CD8-positive, alpha-beta T cell (primary cell): ENCODE measurements at regions of chr11 and their contacts with region 1.

Region 1: GRCh38 chr11:64240394-64241174 is at the start of gene FKBP2:
- DNase-seq: peak; percentile 94 to 100 (median 97)
- ATAC-seq: peak; percentile 63
- H3K4me3 ChIP-seq: peak within 1 kb of the TSS; percentile 80 to 97
- H3K4me3 Mint-ChIP-seq: peak within 1 kb of the TSS; percentile 90
- H3K27ac ChIP-seq: peak within 1 kb of the TSS; percentile 94 to 99
- H3K27ac Mint-ChIP-seq: peak within 1 kb of the TSS; percentile 100
- H3K4me1 ChIP-seq: peaks cover 29% of the 10 kb centered on the region
- H3K4me1 Mint-ChIP-seq: peaks cover 34% of the 10 kb centered on the region
- H3K27me3 ChIP-seq: no peaks in the 10 kb centered on the region
- H3K27me3 Mint-ChIP-seq: no peaks in the 10 kb centered on the region
- CTCF ChIP-seq: no peak
- total RNA-seq, gene FKBP2: 19.4 TPM

Region 2: DNA sequence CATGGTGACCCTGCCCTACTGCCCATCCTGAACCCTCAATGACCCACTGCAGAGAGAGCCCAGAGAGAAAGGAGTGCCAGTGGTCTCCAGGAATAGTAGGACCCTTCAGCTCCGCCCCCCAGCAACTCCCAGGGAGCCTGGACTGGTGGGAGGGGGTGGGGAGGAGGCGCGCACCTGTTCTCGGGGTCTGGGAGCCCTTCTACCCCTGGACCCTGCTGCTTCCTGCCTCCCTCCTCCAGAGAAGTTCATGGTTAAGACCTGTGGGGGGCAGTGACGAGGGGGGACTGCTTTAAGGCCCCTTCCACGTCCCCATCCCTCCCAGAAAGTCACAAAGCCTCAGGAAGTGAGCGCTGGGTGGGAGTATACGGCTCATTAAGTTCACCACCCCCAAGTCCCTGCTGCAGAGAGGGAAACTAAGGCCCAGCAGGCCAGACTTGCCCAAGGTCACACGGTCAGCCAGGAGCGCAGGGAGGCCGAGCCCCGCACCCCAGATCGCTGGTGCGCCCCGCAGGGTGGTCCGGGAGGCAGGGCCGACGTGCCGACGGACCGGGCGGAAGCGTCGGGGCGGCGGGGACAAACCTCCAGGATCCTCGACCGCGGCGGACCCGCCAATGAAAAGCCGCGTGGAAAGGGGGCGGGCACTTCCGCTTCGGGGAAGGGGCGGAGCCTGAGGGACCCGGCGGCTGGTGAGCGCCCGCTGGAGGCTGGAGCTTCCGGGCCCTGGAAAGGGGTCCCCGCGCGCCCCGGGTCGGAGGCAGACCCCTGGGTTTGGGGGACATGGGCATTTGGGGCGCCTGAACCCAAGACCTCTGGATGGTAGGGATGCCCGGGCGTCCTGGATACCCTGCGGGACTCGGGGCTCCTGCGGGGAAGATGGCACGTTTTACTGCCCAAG is 14.7 kb before region 1 on chr11 and contains the starts of genes NUDT22 and TRPT1:
- CTCF ChIA-PET with region 1: interaction called, 7 read pairs
- POLR2A ChIA-PET with region 1: interaction called, 47 read pairs
- intact Hi-C with region 1: loop called (anchors 1 kb)
- DNase-seq: peak; percentile 75 to 96 (median 93)
- ATAC-seq: peak; percentile 65
- H3K4me3 ChIP-seq: peak within 1 kb of the TSS; percentile 76 to 100
- H3K4me3 Mint-ChIP-seq: peak within 1 kb of the TSS; percentile 93
- H3K27ac ChIP-seq: peak within 1 kb of the TSS; percentile 85 to 88
- H3K27ac Mint-ChIP-seq: peak within 1 kb of the TSS; percentile 91
- H3K4me1 ChIP-seq: peaks cover 41% of the 10 kb centered on the region
- H3K4me1 Mint-ChIP-seq: peaks cover 30% of the 10 kb centered on the region
- H3K27me3 ChIP-seq: no peaks in the 10 kb centered on the region
- H3K27me3 Mint-ChIP-seq: no peaks in the 10 kb centered on the region
- CTCF ChIP-seq: peak; percentile 58
- total RNA-seq, gene NUDT22: 20.1 to 23.6 TPM
- total RNA-seq, gene TRPT1: 12.3 to 14.3 TPM

Region 3: GRCh38 chr11:64291752-64292459 is 51.3 kb after region 1 on chr11:
- CTCF ChIA-PET with region 1: no interaction called
- POLR2A ChIA-PET with region 1: no interaction called
- intact Hi-C with region 1: no loop called
- DNase-seq: peak in 2 of 9 experiments; percentile 51 to 55
- ATAC-seq: peak; percentile 70
- H3K4me3 ChIP-seq: peak overlapping the region in 1 of 2 experiments; percentile 30
- H3K4me3 Mint-ChIP-seq: no peak overlapping the region
- H3K27ac ChIP-seq: no peak overlapping the region
- H3K27ac Mint-ChIP-seq: no peak overlapping the region
- H3K4me1 ChIP-seq: peaks cover 14% of the 10 kb centered on the region
- H3K4me1 Mint-ChIP-seq: peaks cover 12% of the 10 kb centered on the region
- H3K27me3 ChIP-seq: peaks cover 30 to 31% of the 10 kb centered on the region in 2 experiments
- H3K27me3 Mint-ChIP-seq: peaks cover 46% of the 10 kb centered on the region
- CTCF ChIP-seq: no peak

Region 4: GRCh38 chr11:64971421-64972233 is 731.0 kb after region 1 on chr11 and contains the start of gene MAJIN:
- CTCF ChIA-PET with region 1: no interaction called
- POLR2A ChIA-PET with region 1: no interaction called
- intact Hi-C with region 1: no loop called
- DNase-seq: peak; percentile 65 to 93 (median 87)
- ATAC-seq: peak; percentile 86
- H3K4me3 ChIP-seq: peak within 1 kb of the TSS; percentile 41 to 47
- H3K4me3 Mint-ChIP-seq: peak within 1 kb of the TSS; percentile 60
- H3K27ac ChIP-seq: peak within 1 kb of the TSS in 1 of 2 experiments; percentile 37
- H3K27ac Mint-ChIP-seq: peak within 1 kb of the TSS; percentile 57
- H3K4me1 ChIP-seq: peaks cover 10% of the 10 kb centered on the region
- H3K4me1 Mint-ChIP-seq: peaks cover 10% of the 10 kb centered on the region
- H3K27me3 ChIP-seq: peaks cover 0 to 2% of the 10 kb centered on the region in 2 experiments
- H3K27me3 Mint-ChIP-seq: peaks cover 5% of the 10 kb centered on the region
- CTCF ChIP-seq: no peak
- total RNA-seq, gene MAJIN: not detected